Aorta (tissue), 5 donors: ENCODE measurements at regions of chr22 and their contacts with region 1.

Region 1: DNA sequence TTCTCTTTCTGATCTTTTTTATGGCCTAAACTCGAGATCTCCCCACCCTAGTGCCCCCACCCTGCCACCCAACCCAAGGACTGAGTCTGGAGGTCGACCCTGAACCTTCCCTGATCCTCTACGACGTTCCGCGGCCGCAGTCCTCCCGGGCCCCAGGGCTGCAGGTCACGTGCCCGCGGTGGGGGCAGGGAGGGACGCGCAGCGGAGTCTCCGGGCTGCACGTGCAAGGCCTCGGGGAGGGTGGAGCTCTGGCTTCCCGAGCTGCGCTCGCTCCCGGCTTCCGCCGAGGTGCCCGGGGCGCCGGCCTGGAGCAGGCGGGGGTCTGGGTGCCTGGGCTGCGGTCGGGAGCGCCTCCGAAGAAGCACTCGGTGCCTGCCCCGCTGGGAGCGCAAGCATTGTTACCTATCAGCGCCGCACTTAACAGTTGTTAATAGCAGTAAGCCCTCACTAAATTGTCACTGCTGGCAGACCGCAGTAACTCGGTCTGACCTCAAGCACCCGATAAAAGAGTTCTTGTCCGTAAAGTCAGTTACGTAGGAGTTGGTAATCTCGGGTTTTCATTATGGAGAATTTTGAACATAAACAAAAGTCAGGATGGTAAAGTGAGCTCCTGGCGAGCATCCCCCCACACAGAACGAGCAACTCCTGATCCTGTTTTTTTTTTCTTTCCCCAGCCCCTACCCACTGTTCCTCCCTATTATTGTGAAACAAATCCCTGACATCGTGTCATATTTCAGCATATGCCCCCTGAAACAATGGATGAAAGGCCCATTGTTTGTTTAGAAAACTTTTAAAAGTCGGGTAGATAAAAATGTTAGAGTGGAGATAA is 69.7 kb upstream of the EP300 start:
- DNase-seq: peak; percentile 94 to 96
- ATAC-seq: peak; percentile 95
- H3K4me3 ChIP-seq: peak overlapping the region; percentile 77 to 82
- H3K27ac ChIP-seq: peak overlapping the region; percentile 31 to 70
- H3K4me1 ChIP-seq: no peaks in the 10 kb centered on the region
- H3K27me3 ChIP-seq: no peaks in the 10 kb centered on the region

Region 2: DNA sequence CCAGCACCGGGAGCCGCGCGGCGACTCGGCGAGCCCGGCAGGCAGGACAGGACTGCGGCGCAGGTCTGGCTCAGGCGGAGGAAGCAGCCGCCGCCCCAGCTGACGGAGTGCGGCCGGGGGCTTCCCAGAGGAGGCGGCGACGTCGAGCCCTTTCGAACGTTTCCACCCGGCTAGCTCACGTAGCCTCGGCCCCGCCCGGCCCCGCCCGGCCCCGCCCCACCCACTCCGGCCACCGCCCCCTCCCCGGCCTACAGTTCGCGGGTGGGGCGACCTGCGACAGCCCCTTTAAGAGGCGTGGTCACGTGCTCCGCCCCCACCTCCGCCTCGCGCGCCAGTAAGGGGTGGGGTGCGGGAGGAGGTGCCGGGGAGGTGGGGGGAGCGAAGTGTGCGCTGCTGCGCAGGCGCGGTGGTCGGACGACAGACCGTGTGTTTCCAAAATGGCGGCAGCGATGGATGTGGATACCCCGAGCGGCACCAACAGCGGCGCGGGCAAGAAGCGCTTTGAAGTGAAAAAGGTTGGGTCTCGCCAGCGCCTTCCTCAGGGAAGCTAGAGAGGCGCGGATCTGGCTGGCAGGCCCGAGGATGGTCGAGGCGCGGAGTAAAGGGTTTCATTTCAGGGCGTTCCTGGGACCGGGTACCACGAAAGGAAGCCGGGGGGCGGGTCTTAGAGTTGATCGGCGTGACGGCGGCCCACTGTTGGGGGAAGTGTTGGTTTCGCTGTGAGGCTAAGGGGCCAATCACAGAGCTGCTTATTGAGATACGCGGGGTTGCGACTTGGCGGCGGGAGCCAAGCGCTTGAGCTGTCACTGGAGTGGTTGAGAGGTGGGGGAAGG is 71.5 kb before region 1 on chr22 and contains the start of gene RBX1:
- intact Hi-C with region 1: loop called in 1 of 2 experiments (anchors 1 kb)
- DNase-seq: peak; percentile 99
- ATAC-seq: peak; percentile 99
- H3K4me3 ChIP-seq: peak within 1 kb of the TSS; percentile 84 to 87
- H3K27ac ChIP-seq: peak within 1 kb of the TSS; percentile 36 to 83
- H3K4me1 ChIP-seq: no peaks in the 10 kb centered on the region
- H3K27me3 ChIP-seq: no peaks in the 10 kb centered on the region
- total RNA-seq, gene RBX1: 36.2 to 40.8 TPM